AG04450 (cell line): ENCODE measurements at regions of chr12 and their contacts with region 1.

Region 1: GRCh38 chr12:50111693-50112455 is at the start of gene COX14:
- DNase-seq: peak; percentile 99
- H3K4me3 ChIP-seq: peak within 1 kb of the TSS; percentile 99
- H3K27ac ChIP-seq: peak within 1 kb of the TSS; percentile 96
- H3K27me3 ChIP-seq: no peaks in the 10 kb centered on the region
- CTCF ChIP-seq: peak; percentile 92
- polyA plus RNA-seq, gene COX14: 77.0 and 90.6 TPM in 2 replicates

Region 2: GRCh38 chr12:50084775-50085614 is 26.9 kb before region 1 on chr12 and contains the start of gene SMARCD1:
- CTCF ChIA-PET with region 1: interaction called, 32 read pairs
- POLR2A ChIA-PET with region 1: interaction called, 18 read pairs
- DNase-seq: peak; percentile 81
- H3K4me3 ChIP-seq: peak within 1 kb of the TSS; percentile 82
- H3K27ac ChIP-seq: peak within 1 kb of the TSS; percentile 87
- H3K27me3 ChIP-seq: no peaks in the 10 kb centered on the region
- CTCF ChIP-seq: peak; percentile 53
- polyA plus RNA-seq, gene SMARCD1: 57.2 and 65.1 TPM in 2 replicates

Region 3: DNA sequence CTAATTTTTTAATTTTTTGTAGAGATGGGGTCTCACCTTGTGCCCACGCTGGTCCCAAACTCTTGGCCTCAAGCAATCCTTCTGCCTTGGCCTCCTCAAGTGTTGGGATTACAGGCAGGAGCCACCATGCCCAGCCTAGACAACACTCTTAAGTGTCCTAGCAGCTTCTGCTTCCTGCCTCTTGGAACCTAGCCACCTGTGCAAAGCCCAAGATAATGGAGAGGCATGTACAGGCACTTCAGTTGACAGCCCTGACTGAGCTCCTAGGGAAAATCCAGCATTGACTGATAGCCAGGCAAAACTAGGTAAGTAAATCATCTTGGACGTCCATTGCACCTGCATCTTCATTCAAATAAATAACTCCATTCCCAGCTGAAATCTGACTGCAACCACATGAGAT is 15.7 kb after region 1 on chr12:
- CTCF ChIA-PET with region 1: interaction called, 28 read pairs
- POLR2A ChIA-PET with region 1: interaction called, 15 read pairs
- DNase-seq: no peak
- H3K4me3 ChIP-seq: no peak overlapping the region
- H3K27ac ChIP-seq: no peak overlapping the region
- H3K27me3 ChIP-seq: no peaks in the 10 kb centered on the region
- CTCF ChIP-seq: no peak

Region 4: GRCh38 chr12:50162230-50162629 is 50.4 kb after region 1 on chr12:
- CTCF ChIA-PET with region 1: interaction called, 11 read pairs
- POLR2A ChIA-PET with region 1: interaction called, 33 read pairs
- DNase-seq: no peak
- H3K4me3 ChIP-seq: no peak overlapping the region
- H3K27ac ChIP-seq: no peak overlapping the region
- H3K27me3 ChIP-seq: no peaks in the 10 kb centered on the region
- CTCF ChIP-seq: no peak

Region 5: GRCh38 chr12:50174971-50175715 is 63.3 kb after region 1 on chr12:
- CTCF ChIA-PET with region 1: interaction called, 23 read pairs
- POLR2A ChIA-PET with region 1: interaction called, 8 read pairs
- DNase-seq: peak; percentile 67
- H3K4me3 ChIP-seq: no peak overlapping the region
- H3K27ac ChIP-seq: no peak overlapping the region
- H3K27me3 ChIP-seq: no peaks in the 10 kb centered on the region
- CTCF ChIP-seq: peak; percentile 62